A673 (cell line): ENCODE measurements at regions of chr12 and their contacts with region 1.

Region 1: GRCh38 chr12:52879394-52880351 is 25.2 kb downstream of the KRT8 start:
- DNase-seq: peak; percentile 94
- H3K4me3 ChIP-seq: peak overlapping the region; percentile 30
- H3K27ac ChIP-seq: peak overlapping the region; percentile 11
- H3K4me1 ChIP-seq: peaks cover 8% of the 10 kb centered on the region
- H3K27me3 ChIP-seq: no peaks in the 10 kb centered on the region
- CTCF ChIP-seq: peak; percentile 72

Region 2: DNA sequence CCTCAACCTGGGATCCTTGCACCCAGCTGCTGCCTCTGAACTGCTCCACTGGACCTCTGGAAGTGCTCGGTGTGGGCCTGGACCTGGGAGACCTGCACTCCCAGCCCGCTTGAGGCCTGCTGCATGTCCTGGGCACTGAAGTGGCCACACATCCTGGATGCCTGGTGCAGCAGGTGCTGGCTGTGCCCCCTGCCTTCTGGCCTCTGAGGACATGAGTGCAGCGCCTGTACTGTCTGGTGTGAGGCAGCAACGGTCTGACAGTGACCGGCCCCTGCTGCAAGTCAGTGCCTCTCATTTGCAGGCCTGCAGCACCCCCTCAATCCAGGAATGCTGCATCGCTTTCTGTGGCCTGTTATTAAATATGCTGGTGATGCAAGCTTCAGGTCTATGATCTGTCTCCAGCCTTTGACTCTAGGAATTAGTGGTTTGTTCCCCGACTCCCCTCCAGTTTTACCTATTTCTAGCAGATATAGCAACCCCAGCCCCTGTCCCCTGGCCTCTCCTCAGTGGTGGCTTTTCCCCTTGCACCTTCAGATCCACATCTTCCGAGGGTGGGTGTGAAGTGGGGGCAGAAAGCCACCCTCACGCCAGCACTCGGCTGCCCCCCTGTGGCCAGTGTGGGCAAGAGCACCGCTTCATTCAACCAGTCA is 796.6 kb before region 1 on chr12:
- CTCF ChIA-PET with region 1: no interaction called
- POLR2A ChIA-PET with region 1: no interaction called
- intact Hi-C with region 1: no loop called
- DNase-seq: peak; percentile 72
- H3K4me3 ChIP-seq: no peak overlapping the region
- H3K27ac ChIP-seq: peak overlapping the region; percentile 23
- H3K4me1 ChIP-seq: peaks cover 24% of the 10 kb centered on the region
- H3K27me3 ChIP-seq: no peaks in the 10 kb centered on the region
- CTCF ChIP-seq: peak; percentile 99

Region 3: GRCh38 chr12:52156736-52157565 is 722.7 kb before region 1 on chr12:
- CTCF ChIA-PET with region 1: interaction called, 7 read pairs
- POLR2A ChIA-PET with region 1: no interaction called
- intact Hi-C with region 1: loop called (anchors 1 kb)
- DNase-seq: peak; percentile 74
- H3K4me3 ChIP-seq: no peak overlapping the region
- H3K27ac ChIP-seq: no peak overlapping the region
- H3K4me1 ChIP-seq: no peaks in the 10 kb centered on the region
- H3K27me3 ChIP-seq: no peaks in the 10 kb centered on the region
- CTCF ChIP-seq: peak; percentile 99

Region 4: DNA sequence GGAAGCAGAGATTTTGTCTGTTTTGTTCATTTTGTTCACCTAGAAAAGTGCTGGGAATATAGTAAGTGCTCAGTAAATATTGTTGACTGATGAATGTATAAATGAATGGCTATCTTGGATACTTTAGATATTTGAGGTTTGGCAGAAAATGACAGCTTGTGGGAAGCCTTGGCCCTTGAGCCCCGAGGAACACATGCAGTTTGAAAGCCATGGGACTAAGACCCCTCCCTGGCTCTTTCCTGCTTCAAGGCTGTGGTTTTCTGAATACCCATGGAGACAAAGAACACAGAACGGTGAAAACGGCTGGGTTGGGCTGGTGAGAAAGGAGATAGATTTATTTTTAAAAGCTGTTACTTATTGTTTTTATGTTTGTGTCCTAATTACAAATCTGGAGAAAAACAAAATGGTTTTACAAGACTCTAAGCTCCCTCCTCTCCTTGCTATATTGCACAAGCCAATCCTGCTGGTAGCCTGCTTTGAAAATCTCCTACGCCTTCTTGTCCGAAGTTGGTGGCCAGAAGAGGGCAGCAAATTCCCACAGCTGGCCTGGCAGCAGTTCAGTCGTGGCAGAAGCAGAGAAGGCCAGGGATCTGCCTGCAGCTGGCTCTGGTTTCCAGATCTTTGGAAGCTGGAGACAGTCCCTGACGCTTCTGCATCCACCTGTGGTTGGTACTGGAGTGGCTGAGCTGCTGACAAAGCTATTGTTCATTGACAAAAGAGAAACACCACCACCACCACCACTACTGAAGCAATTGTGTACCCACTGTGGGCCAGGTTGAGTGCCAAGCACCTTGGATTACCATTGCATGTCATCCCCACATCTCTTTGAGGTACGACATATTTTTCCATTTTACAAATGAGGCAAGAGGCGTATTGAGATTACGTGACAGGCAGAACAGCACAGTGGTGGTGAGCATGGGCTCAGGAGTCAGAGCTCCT is 507.2 kb before region 1 on chr12:
- CTCF ChIA-PET with region 1: interaction called, 15 read pairs
- POLR2A ChIA-PET with region 1: interaction called, 8 read pairs
- intact Hi-C with region 1: loop called (anchors 5 kb)
- DNase-seq: peak; percentile 76
- H3K4me3 ChIP-seq: no peak overlapping the region
- H3K27ac ChIP-seq: no peak overlapping the region
- H3K4me1 ChIP-seq: no peaks in the 10 kb centered on the region
- H3K27me3 ChIP-seq: no peaks in the 10 kb centered on the region
- CTCF ChIP-seq: peak; percentile 73

Region 5: GRCh38 chr12:52969828-52970569 is 90.3 kb after region 1 on chr12:
- CTCF ChIA-PET with region 1: no interaction called
- POLR2A ChIA-PET with region 1: interaction called, 14 read pairs
- intact Hi-C with region 1: no loop called
- DNase-seq: no peak
- H3K4me3 ChIP-seq: no peak overlapping the region
- H3K27ac ChIP-seq: no peak overlapping the region
- H3K4me1 ChIP-seq: peaks cover 17% of the 10 kb centered on the region
- H3K27me3 ChIP-seq: no peaks in the 10 kb centered on the region
- CTCF ChIP-seq: no peak

Region 6: DNA sequence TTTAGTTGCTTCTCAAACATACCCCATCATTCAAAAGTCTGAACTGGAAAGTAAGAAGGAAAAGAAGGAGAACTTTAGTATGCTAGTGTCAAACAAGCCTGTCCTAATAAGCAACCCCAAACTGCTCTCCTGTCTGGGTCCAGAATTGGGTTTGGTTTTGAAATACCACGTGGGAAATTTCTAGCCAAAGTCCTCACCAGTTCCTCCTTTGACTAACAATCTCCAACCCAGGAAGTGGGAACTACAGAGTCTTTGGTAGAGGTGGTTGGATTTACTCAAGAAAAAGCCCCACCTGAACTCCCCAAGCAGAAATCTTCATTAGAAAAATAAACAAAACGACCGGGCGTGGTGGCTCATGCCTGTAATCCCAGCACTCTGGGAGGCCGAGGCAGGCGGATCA is 109.2 kb after region 1 on chr12:
- CTCF ChIA-PET with region 1: interaction called, 7 read pairs
- POLR2A ChIA-PET with region 1: interaction called, 11 read pairs
- intact Hi-C with region 1: no loop called
- DNase-seq: no peak
- H3K4me3 ChIP-seq: no peak overlapping the region
- H3K27ac ChIP-seq: no peak overlapping the region
- H3K4me1 ChIP-seq: no peaks in the 10 kb centered on the region
- H3K27me3 ChIP-seq: no peaks in the 10 kb centered on the region
- CTCF ChIP-seq: no peak